Natural killer cell (primary cell): ENCODE measurements at regions of chr22 and their contacts with region 1.

Region 1: GRCh38 chr22:45863981-45864751 is 112.8 kb downstream of the WNT7B start:
- DNase-seq: peak; percentile 66 to 71
- ATAC-seq: peak; percentile 79 to 88 (median 84)
- H3K4me3 ChIP-seq: no peak overlapping the region
- H3K4me3 Mint-ChIP-seq: no peak overlapping the region
- H3K27ac ChIP-seq: no peak overlapping the region
- H3K27ac Mint-ChIP-seq: no peak overlapping the region
- H3K4me1 ChIP-seq: peaks cover 8% of the 10 kb centered on the region
- H3K4me1 Mint-ChIP-seq: peaks cover 6 to 20% of the 10 kb centered on the region in 2 donors
- H3K27me3 ChIP-seq: peaks cover 18% of the 10 kb centered on the region
- H3K27me3 Mint-ChIP-seq: peaks cover 33 to 36% of the 10 kb centered on the region in 2 donors
- CTCF ChIP-seq: peak; percentile 93

Region 2: DNA sequence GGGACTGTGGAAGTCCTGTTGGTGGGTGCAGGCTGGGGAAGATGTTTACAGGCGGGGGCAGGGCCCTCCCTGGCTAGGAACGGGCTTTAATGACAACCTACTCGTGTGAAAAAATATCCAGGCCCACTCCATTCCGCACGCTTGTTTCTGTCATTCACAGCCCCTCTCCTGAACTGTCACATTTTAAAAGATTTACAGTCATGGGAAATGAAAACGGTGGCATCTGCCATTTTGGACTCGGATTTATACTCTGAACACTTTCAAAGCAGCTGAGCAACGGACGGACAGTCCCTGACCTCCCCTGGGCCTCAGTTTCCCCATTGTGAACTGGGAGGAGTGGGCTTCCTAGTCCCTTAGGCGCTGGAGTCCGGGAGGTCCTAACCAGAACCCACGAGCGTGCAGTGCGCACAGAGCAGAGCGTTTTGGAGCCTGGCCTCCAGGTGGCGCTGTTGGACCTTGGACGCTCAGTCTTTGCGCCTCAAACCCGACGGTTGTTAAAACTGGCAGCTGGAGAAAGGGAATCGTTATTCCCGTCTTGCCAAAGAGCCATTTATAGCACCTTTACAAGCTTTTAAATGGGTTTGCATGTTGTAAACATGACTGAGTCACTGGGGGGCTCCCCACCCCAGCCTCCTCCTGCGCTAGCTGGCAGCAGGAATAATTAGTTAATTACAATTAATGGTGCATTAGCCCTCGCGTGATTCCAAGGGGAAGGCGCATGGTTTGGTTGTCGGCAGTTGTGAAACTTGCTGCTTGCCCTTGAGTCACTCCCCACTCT is 286.2 kb before region 1 on chr22:
- intact Hi-C with region 1: loop called (anchors 10 kb)
- DNase-seq: peak; percentile 73 to 85
- ATAC-seq: peak; percentile 77 to 86 (median 85)
- H3K4me3 ChIP-seq: no peak overlapping the region
- H3K4me3 Mint-ChIP-seq: no peak overlapping the region
- H3K27ac ChIP-seq: no peak overlapping the region
- H3K27ac Mint-ChIP-seq: no peak overlapping the region
- H3K4me1 ChIP-seq: peaks cover 18% of the 10 kb centered on the region
- H3K4me1 Mint-ChIP-seq: peaks cover 0 to 8% of the 10 kb centered on the region in 2 donors
- H3K27me3 ChIP-seq: peaks cover 2% of the 10 kb centered on the region
- H3K27me3 Mint-ChIP-seq: peaks cover 0 to 8% of the 10 kb centered on the region in 2 donors
- CTCF ChIP-seq: peak; percentile 92